RWPE1 (cell line): ENCODE measurements at regions of chr2 and their contacts with region 1.

Region 1: GRCh38 chr2:200966770-200967169 is 3.3 kb upstream of the ORC2 start:
- DNase-seq: peak; percentile 75
- H3K27ac ChIP-seq: 0 out of 2 replicates have a peak overlapping the region, but pooled peaks have one; percentile 28
- CTCF ChIP-seq: no peak

Region 2: DNA sequence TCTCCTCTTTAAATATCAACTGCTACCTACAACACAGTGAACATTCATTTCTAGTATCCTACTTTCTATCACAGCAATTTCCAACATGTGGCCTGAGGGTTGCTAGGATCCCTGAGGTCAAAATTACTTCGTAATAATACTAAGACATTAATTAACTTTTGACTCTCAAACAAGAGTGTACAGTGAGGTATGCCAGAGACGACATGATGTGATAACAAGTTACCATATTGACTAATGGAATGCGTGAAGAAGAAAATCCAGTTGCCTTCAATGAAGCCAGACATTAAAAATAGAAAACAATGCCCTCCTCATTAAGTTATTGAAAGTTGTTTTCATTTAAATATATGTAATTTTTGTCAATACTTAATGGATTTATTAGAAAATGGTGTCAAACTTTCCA is 16.4 kb before region 1 on chr2:
- CTCF ChIA-PET with region 1: interaction called, 10 read pairs
- POLR2A ChIA-PET with region 1: no interaction called
- DNase-seq: no peak
- H3K27ac ChIP-seq: no peak overlapping the region
- CTCF ChIP-seq: no peak